Stomach (tissue), 19 donors: ENCODE measurements at regions of chr9 and their contacts with region 1.

Region 1: GRCh38 chr9:5582835-5583195 is 46.1 kb upstream of the RIC1 start:
- DNase-seq: peak in 1 of 2 donors; percentile 61
- H3K4me3 ChIP-seq: no peak overlapping the region
- H3K27ac ChIP-seq: no peak overlapping the region
- H3K4me1 ChIP-seq: no peaks in the 10 kb centered on the region
- H3K27me3 ChIP-seq: no peaks in the 10 kb centered on the region
- CTCF ChIP-seq: no peak
- EP300 ChIP-seq: no peak
- POLR2A ChIP-seq: no peak

Region 2: GRCh38 chr9:5468850-5469249 is 114.0 kb before region 1 on chr9:
- intact Hi-C with region 1: loop called (anchors 10 kb)
- DNase-seq: no peak
- H3K4me3 ChIP-seq: no peak overlapping the region
- H3K27ac ChIP-seq: no peak overlapping the region
- H3K4me1 ChIP-seq: peaks cover 0 to 3% (median 0%) of the 10 kb centered on the region in 4 donors
- H3K27me3 ChIP-seq: no peaks in the 10 kb centered on the region
- CTCF ChIP-seq: no peak
- EP300 ChIP-seq: no peak
- POLR2A ChIP-seq: no peak